A673 (cell line): ENCODE measurements at regions of chr5 and their contacts with region 1.

Region 1: DNA sequence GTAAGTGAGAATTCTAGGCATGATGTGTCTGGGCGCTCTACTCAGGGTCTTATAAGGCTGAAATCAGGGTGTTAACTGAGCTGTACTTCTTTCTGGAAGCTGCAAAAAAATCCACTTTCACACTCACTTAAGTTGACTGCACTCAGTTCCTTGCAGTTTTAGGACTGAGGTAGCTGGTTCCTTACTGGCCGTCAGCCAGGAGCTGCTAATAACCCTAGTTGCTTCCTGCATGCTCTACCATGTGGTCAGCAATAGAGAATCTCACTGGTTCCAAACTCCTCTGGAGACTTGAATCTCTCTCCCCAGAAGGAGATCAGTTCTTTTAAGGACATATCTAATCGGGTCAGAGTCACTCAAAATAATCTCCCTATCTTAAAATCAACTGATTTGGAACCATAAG is 911.2 kb downstream of the EFNA5 start:
- DNase-seq: peak; percentile 60
- H3K4me3 ChIP-seq: no peak overlapping the region
- H3K27ac ChIP-seq: no peak overlapping the region
- H3K4me1 ChIP-seq: peaks cover 33% of the 10 kb centered on the region
- H3K27me3 ChIP-seq: no peaks in the 10 kb centered on the region
- CTCF ChIP-seq: no peak

Region 2: GRCh38 chr5:106875591-106876297 is 116.2 kb after region 1 on chr5:
- CTCF ChIA-PET with region 1: no interaction called
- POLR2A ChIA-PET with region 1: no interaction called
- intact Hi-C with region 1: loop called (anchors 10 kb)
- DNase-seq: peak; percentile 57
- H3K4me3 ChIP-seq: no peak overlapping the region
- H3K27ac ChIP-seq: no peak overlapping the region
- H3K4me1 ChIP-seq: no peaks in the 10 kb centered on the region
- H3K27me3 ChIP-seq: no peaks in the 10 kb centered on the region
- CTCF ChIP-seq: peak; percentile 49

Region 3: DNA sequence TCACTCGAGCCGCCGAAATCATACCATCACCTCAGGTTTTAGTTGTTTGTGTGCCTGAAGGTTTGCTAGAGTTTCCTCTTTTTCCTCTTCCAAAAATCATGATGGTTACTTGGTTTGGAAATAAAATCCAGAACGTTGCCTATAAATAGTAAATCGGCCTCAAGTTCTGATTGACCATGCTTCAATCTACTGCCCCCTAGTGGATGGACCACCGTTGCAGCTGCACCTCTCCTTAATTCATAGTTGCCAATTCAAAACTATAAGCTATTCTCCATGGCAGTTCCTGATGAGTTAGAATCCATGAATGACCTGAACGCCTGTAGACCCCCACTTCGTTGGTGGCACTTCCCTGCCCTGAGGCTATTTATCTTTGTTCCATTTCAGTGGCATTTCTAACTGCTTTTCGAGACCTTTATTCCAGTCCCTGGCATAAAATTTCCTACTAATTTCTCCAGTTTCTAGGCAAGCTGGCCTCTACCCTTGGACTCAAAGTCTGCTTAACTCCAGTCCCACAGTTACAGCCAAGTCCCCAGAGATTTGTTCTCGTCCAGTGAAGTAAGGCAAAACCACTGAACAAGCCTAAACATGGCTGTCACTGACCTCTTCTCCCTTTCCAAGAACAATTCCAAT is 488.6 kb after region 1 on chr5:
- CTCF ChIA-PET with region 1: interaction called, 3 read pairs
- POLR2A ChIA-PET with region 1: no interaction called
- intact Hi-C with region 1: loop called (anchors 10 kb)
- DNase-seq: peak; percentile 80
- H3K4me3 ChIP-seq: no peak overlapping the region
- H3K27ac ChIP-seq: no peak overlapping the region
- H3K4me1 ChIP-seq: peaks cover 4% of the 10 kb centered on the region
- H3K27me3 ChIP-seq: no peaks in the 10 kb centered on the region
- CTCF ChIP-seq: peak; percentile 95